Gastrocnemius medialis (tissue), 4 donors: ENCODE measurements at regions of chr1 and their contacts with region 1.

Region 1: GRCh38 chr1:168082008-168082876 is 54.5 kb downstream of the GPR161 start:
- DNase-seq: peak; percentile 55 to 69
- ATAC-seq: peak; percentile 64 to 80
- H3K4me3 ChIP-seq: no peak overlapping the region
- H3K27ac ChIP-seq: peak overlapping the region; percentile 51 to 70 (median 60)
- H3K4me1 ChIP-seq: peaks cover 17 to 19% of the 10 kb centered on the region in 2 donors
- H3K27me3 ChIP-seq: no peaks in the 10 kb centered on the region
- CTCF ChIP-seq: peak; percentile 72 to 89 (median 83)
- POLR2A ChIP-seq: no peak

Region 2: GRCh38 chr1:167721617-167722151 is 360.6 kb before region 1 on chr1 and contains the start of gene MPZL1:
- in situ Hi-C with region 1: no loop called
- intact Hi-C with region 1: loop called (anchors 5 kb)
- DNase-seq: peak; percentile 95
- ATAC-seq: peak; percentile 96 to 97
- H3K4me3 ChIP-seq: peak within 1 kb of the TSS; percentile 73 to 93 (median 90)
- H3K27ac ChIP-seq: peak within 1 kb of the TSS; percentile 79 to 92 (median 87)
- H3K4me1 ChIP-seq: peaks cover 23 to 34% of the 10 kb centered on the region in 2 donors
- H3K27me3 ChIP-seq: no peaks in the 10 kb centered on the region
- CTCF ChIP-seq: no peak
- POLR2A ChIP-seq: peak; percentile 76 to 80
- total RNA-seq, gene MPZL1: 9.2 to 15.7 (median 11.7) TPM

Region 3: DNA sequence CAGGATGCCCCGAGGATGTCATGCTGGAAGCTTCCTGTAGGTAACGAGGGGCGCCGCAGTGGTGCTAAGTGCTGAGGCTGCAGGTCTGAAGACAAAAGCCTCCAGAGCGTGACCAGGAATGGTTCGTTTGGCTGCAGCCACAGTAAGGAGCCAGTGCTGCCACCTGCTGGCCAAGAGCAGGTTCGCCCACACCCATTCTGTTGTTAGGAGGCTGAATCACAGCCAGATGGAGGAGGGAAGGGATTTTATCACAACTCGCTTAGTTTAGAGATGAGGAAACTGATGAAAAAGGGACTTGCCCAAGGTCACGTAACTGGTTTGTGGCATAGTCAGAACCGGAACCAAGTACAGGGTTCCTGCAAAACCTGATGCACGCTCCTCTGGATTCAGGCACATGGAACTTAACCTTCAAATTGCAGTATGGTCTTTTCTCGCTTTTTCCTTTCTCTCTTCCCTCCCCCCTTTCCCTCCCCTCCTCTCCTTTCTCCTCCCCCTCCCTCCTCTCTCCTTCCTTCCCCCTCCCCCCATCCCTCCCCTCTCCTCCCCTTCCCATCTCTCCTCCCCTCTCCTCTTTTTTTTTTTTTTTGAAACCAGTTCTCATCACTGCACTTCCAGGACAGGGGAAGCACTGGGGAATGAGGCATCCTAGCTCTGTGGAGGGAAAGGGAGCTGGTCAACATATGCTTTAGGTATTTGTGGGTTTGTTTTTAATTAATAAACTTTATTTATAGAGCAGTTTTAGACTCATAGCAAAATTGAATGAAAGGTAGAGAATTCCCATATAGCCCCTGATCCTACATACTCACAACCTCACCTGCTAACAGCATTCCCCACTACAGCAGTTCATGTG is 278.7 kb before region 1 on chr1:
- in situ Hi-C with region 1: loop called in 1 of 4 experiments (anchors 25 kb)
- intact Hi-C with region 1: loop called (anchors 5 kb)
- DNase-seq: peak; percentile 78 to 84
- ATAC-seq: peak; percentile 98 to 99
- H3K4me3 ChIP-seq: peak overlapping the region in 1 of 4 donors; percentile 17
- H3K27ac ChIP-seq: no peak overlapping the region
- H3K4me1 ChIP-seq: no peaks in the 10 kb centered on the region
- H3K27me3 ChIP-seq: no peaks in the 10 kb centered on the region
- CTCF ChIP-seq: peak; percentile 73 to 96 (median 87)
- POLR2A ChIP-seq: no peak

Region 4: DNA sequence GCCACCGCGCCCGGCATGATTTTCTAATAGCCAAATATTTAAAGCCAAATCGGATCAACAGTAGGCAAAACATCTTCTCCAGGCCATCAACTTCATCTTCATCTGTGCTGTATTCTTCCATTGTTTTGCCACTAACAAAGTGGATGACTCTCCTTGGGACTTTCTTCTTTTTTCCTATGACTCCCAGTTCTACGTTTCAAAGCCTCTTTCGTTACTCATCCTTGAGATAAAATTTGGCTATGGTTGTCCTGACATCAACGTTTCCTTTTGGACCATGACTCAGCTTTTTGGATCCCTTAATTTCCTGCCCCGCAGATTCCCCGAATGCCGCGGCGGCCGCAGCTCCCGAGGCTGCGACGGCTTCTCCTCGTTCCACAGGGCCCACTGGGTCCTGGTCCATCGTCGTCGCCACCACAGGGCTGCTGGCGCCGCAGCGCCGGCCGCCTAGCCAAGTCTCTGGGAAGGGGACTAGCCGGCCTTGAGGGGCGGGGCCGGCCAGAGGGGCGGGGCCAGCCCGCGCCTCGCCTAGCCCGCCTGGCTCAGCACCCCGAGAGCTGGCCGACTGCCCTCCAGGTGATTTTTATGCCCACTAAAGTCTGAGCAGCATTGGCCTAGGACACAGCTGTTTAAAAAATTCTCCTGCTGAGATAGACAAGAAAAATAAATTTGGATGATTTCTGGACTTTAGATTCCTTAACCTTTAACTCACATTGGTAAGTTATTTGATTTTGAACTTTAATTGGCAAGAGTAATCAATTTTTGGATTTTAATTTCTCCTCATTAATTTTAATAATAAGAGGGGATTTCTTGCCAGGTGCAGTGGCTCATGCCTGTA is 262.2 kb before region 1 on chr1:
- in situ Hi-C with region 1: loop called in 1 of 4 experiments (anchors 25 kb)
- intact Hi-C with region 1: loop called (anchors 5 kb)
- DNase-seq: peak; percentile 45 to 85
- ATAC-seq: peak; percentile 92 to 93
- H3K4me3 ChIP-seq: peak overlapping the region; percentile 43 to 59 (median 47)
- H3K27ac ChIP-seq: peak overlapping the region; percentile 64 to 82 (median 76)
- H3K4me1 ChIP-seq: peaks cover 0 to 9% of the 10 kb centered on the region in 2 donors
- H3K27me3 ChIP-seq: no peaks in the 10 kb centered on the region
- CTCF ChIP-seq: no peak
- POLR2A ChIP-seq: no peak

Region 5: GRCh38 chr1:167922023-167922422 is 160.2 kb before region 1 on chr1:
- in situ Hi-C with region 1: no loop called
- intact Hi-C with region 1: loop called (anchors 5 kb)
- DNase-seq: no peak
- ATAC-seq: peak; percentile 94
- H3K4me3 ChIP-seq: peak overlapping the region in 3 of 4 donors; percentile 6 to 31 (median 26)
- H3K27ac ChIP-seq: peak overlapping the region; percentile 72 to 85 (median 74)
- H3K4me1 ChIP-seq: peaks cover 24 to 39% of the 10 kb centered on the region in 2 donors
- H3K27me3 ChIP-seq: no peaks in the 10 kb centered on the region
- CTCF ChIP-seq: no peak
- POLR2A ChIP-seq: no peak

Region 6: DNA sequence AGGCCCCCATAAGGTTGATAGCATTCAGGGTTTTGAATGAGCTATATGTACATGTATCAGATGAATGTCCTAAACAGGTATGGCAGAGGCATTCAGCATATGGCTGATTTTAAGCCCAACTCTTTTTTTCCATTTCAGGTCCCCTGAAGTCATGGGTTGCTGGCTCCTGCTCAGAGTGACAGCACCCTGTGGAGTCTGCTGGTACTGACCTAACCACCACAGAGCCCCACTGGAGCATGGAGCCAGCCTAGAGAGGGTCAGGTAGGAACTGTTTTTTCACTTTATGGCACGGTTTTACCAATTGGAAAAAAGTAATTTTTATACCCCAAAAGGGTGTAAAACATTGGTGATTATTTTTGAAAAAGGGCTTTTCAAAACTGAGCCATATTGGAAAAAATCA is 62.8 kb before region 1 on chr1:
- in situ Hi-C with region 1: no loop called
- intact Hi-C with region 1: no loop called
- DNase-seq: no peak
- ATAC-seq: no peak
- H3K4me3 ChIP-seq: no peak overlapping the region
- H3K27ac ChIP-seq: no peak overlapping the region
- H3K4me1 ChIP-seq: no peaks in the 10 kb centered on the region
- H3K27me3 ChIP-seq: no peaks in the 10 kb centered on the region
- CTCF ChIP-seq: no peak
- POLR2A ChIP-seq: no peak